Naive thymus-derived CD4-positive, alpha-beta T cell (primary cell): ENCODE measurements at regions of chr4 and their contacts with region 1.

Region 1: DNA sequence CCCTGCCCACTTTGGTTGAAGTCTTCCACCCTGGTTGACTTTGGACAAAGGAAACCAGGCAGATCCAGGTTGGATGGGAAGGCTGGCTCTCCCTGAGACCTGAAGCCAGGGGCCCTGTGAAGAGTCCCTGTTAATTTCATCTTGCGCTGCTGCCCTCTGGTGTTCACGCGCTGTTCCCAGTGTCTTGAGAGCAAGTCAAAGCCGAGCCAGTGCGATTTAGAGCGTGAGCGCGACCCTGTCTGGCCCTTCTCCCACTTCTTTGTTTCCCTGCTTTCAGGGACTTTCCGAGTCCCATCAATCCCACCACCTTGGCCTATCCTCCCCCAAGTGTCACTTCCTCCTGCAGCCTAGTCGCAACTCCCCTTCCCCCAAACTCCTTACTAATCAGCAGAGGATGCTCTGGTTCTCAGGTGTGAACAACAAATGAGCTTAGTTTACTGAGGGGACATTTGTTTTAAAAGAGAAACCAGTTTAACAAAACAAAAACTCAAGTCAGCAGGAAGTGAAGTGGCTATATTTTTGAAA is 25.8 kb upstream of the CHRNA9 start:
- DNase-seq: peak; percentile 75 to 89 (median 86)
- ATAC-seq: peak; percentile 79
- H3K4me3 ChIP-seq: peak overlapping the region; percentile 35
- H3K4me3 Mint-ChIP-seq: peak overlapping the region; percentile 67 to 91 (median 78)
- H3K27ac ChIP-seq: peak overlapping the region; percentile 87
- H3K27ac Mint-ChIP-seq: peak overlapping the region; percentile 94 to 100 (median 99)
- H3K4me1 ChIP-seq: peaks cover 50 to 81% of the 10 kb centered on the region in 2 donors
- H3K4me1 Mint-ChIP-seq: peaks cover 61 to 97% (median 90%) of the 10 kb centered on the region in 7 donors
- H3K27me3 ChIP-seq: no peaks in the 10 kb centered on the region
- H3K27me3 Mint-ChIP-seq: no peaks in the 10 kb centered on the region

Region 2: GRCh38 chr4:39527273-39528060 is 781.8 kb before region 1 on chr4 and contains the start of gene UGDH:
- CTCF ChIA-PET with region 1: no interaction called
- POLR2A ChIA-PET with region 1: no interaction called
- intact Hi-C with region 1: loop called in 1 of 2 experiments (anchors 10 kb)
- DNase-seq: peak; percentile 85 to 95 (median 88)
- ATAC-seq: peak; percentile 99
- H3K4me3 ChIP-seq: peak within 1 kb of the TSS; percentile 81
- H3K4me3 Mint-ChIP-seq: peak within 1 kb of the TSS; percentile 88 to 99 (median 98)
- H3K27ac ChIP-seq: peak within 1 kb of the TSS; percentile 74
- H3K27ac Mint-ChIP-seq: peak within 1 kb of the TSS; percentile 84 to 97 (median 93)
- H3K4me1 ChIP-seq: peaks cover 7 to 10% of the 10 kb centered on the region in 2 donors
- H3K4me1 Mint-ChIP-seq: peaks cover 11 to 26% (median 19%) of the 10 kb centered on the region in 7 donors
- H3K27me3 ChIP-seq: no peaks in the 10 kb centered on the region
- H3K27me3 Mint-ChIP-seq: no peaks in the 10 kb centered on the region
- total RNA-seq, gene UGDH: 6.9 to 20.9 (median 17.7) TPM

Region 3: DNA sequence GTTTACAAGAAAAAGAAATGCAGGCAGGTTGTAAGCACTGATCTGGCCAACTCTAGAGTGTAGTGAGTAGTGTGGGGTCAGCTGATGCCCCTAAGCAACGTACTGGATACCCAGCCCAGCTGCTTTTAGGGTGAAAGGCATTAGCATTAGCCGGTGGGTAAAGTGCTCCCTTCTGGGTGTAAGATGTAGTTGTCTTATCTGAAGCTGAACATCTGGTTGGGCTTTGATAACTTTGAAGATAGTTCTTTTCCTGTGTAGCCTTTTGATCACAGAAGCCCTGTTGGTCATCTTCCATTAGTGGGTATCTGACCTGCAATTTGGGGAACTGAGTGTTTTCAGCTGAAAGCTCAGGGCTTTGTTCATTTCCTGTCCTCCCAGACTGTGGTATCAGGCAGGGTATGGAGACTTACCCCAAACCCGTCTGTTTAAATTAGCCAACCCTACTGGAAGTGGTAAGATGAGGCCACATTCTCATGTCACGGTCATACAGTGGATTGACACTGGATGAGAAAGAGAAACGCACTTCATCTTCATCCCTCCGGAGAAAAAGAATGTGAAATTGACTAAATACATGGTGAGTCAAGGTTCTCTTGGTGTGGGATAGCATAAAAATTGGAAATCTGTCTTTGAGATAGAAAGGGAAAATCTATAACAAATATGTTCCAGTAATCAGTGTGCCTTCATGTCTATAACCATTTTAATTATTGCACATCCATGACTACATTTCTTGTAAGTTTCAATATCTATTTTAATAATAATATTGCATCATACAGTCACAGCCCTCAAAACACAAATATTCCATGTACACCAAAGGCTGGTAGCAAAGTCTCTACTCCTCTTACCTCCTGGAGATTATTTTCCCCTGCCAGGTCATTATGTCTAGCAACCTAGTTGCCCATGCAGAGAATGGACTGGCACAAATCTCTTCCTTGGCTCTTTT is 103.8 kb before region 1 on chr4:
- CTCF ChIA-PET with region 1: interaction called, 8 read pairs
- POLR2A ChIA-PET with region 1: interaction called, 229 read pairs
- intact Hi-C with region 1: loop called in 1 of 2 experiments (anchors 1 kb)
- DNase-seq: peak in 1 of 9 donors; percentile 44
- ATAC-seq: peak; percentile 66
- H3K4me3 ChIP-seq: peak overlapping the region; percentile 63
- H3K4me3 Mint-ChIP-seq: peak overlapping the region; percentile 91 to 100 (median 98)
- H3K27ac ChIP-seq: peak overlapping the region; percentile 100
- H3K27ac Mint-ChIP-seq: peak overlapping the region; percentile 94 to 100 (median 98)
- H3K4me1 ChIP-seq: peaks cover 24 to 40% of the 10 kb centered on the region in 2 donors
- H3K4me1 Mint-ChIP-seq: peaks cover 55 to 78% (median 67%) of the 10 kb centered on the region in 7 donors
- H3K27me3 ChIP-seq: no peaks in the 10 kb centered on the region
- H3K27me3 Mint-ChIP-seq: no peaks in the 10 kb centered on the region

Region 4: GRCh38 chr4:40238700-40239548 is 70.4 kb before region 1 on chr4:
- CTCF ChIA-PET with region 1: interaction called, 6 read pairs
- POLR2A ChIA-PET with region 1: interaction called, 62 read pairs
- intact Hi-C with region 1: no loop called
- DNase-seq: peak in 8 of 9 donors; percentile 54 to 90 (median 75)
- ATAC-seq: peak; percentile 94
- H3K4me3 ChIP-seq: peak overlapping the region; percentile 49
- H3K4me3 Mint-ChIP-seq: peak overlapping the region; percentile 64 to 87 (median 79)
- H3K27ac ChIP-seq: peak overlapping the region; percentile 79
- H3K27ac Mint-ChIP-seq: peak overlapping the region; percentile 89 to 98 (median 94)
- H3K4me1 ChIP-seq: peaks cover 81 to 90% of the 10 kb centered on the region in 2 donors
- H3K4me1 Mint-ChIP-seq: peaks cover 54 to 97% (median 94%) of the 10 kb centered on the region in 7 donors
- H3K27me3 ChIP-seq: no peaks in the 10 kb centered on the region
- H3K27me3 Mint-ChIP-seq: no peaks in the 10 kb centered on the region

Region 5: DNA sequence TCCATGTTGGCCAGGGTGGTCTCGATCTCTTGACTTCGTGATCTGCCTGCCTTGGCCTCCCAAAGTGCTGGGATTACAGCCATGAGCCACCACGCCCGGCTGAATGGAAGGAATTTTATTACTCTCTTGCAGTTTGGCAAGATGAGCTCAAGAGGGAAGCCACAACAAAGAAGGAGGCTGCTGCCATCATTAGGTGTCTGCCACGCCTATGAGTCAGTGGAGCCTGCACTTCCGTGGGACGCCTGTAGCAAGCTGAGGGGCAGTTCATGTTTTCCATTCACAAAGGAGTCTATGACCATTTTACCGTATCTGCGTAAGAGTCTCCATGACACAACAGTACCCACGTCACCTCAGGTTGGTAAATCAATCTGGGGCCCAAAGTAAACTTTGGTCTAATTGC is 25.3 kb before region 1 on chr4:
- CTCF ChIA-PET with region 1: interaction called, 18 read pairs
- POLR2A ChIA-PET with region 1: interaction called, 113 read pairs
- intact Hi-C with region 1: loop called (anchors 1 kb)
- DNase-seq: peak in 8 of 9 donors; percentile 60 to 93 (median 81)
- ATAC-seq: peak; percentile 98
- H3K4me3 ChIP-seq: peak overlapping the region; percentile 18
- H3K4me3 Mint-ChIP-seq: peak overlapping the region; percentile 57 to 81 (median 72)
- H3K27ac ChIP-seq: peak overlapping the region; percentile 70
- H3K27ac Mint-ChIP-seq: peak overlapping the region in 8 of 9 donors; percentile 89 to 99 (median 96)
- H3K4me1 ChIP-seq: peaks cover 38 to 40% of the 10 kb centered on the region in 2 donors
- H3K4me1 Mint-ChIP-seq: peaks cover 30 to 85% (median 80%) of the 10 kb centered on the region in 7 donors
- H3K27me3 ChIP-seq: no peaks in the 10 kb centered on the region
- H3K27me3 Mint-ChIP-seq: no peaks in the 10 kb centered on the region

Region 6: GRCh38 chr4:40719008-40719623 is 409.8 kb after region 1 on chr4:
- CTCF ChIA-PET with region 1: no interaction called
- POLR2A ChIA-PET with region 1: interaction called, 3 read pairs
- intact Hi-C with region 1: loop called in 1 of 2 experiments (anchors 5 kb)
- DNase-seq: peak in 1 of 9 donors; percentile 39
- ATAC-seq: no peak
- H3K4me3 ChIP-seq: no peak overlapping the region
- H3K4me3 Mint-ChIP-seq: no peak overlapping the region
- H3K27ac ChIP-seq: no peak overlapping the region
- H3K27ac Mint-ChIP-seq: peak overlapping the region in 1 of 9 donors; percentile 36
- H3K4me1 ChIP-seq: peaks cover 0 to 13% of the 10 kb centered on the region in 2 donors
- H3K4me1 Mint-ChIP-seq: peaks cover 0 to 33% (median 0%) of the 10 kb centered on the region in 7 donors
- H3K27me3 ChIP-seq: no peaks in the 10 kb centered on the region
- H3K27me3 Mint-ChIP-seq: no peaks in the 10 kb centered on the region